ENCODE measurements at regions of chr16 and their contacts with region 1.

Region 1: DNA sequence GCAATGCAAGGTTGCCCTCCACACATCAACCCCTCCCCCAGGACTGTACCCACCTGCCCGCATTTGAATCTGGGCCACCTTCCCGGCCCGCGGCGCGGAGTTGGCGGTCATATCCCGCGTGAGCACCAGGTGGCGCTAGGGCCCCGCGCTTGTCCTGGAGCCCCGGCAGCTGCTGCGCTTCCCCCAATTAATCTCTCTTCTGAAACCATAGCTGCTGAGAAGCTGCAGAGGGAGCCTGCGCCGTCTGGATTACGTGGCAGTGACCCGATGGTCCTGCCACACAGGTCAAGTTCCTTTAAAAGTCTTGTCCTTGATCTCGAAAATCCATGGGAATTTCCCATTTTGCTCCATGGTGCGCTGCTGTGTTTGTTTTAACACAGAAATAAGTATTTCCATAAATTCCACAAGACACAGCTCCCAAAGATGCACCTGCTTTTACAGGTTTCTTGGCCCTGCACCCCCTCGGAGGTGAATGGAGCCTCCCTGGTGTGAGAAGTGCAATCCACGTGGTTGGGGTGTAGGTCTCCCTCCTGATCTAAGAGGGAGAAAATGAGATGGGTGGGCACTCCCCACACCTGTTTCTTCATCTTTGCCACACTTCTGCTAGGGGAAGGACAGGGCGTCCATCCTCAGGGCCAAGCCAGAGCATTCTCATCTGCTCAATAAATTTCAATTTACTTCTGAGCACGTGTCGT is 22.1 kb downstream of the COX4I1 start:
- DNase-seq: peak; percentile 94

Region 2: DNA sequence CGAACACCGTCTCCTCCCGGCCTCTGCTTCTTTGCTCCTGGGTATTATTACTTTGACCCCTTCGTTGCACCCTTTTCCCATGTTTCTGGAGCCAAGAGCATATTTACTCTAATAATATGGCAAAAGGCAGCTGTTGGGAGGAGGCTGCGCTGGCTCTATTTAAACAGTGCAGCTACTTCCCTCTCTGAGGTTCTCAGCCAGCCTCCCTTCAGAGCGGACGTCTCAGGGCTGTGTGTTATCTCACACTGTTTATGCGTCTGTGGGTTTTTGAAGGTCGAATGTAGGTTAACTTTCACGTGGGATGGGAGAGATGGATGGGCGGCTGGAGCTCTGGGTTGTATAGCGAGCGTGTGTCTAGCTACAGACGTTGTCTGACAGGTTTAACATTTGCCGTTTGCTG is 23.2 kb after region 1 on chr16:
- intact Hi-C with region 1: no loop called
- DNase-seq: no peak

Region 3: DNA sequence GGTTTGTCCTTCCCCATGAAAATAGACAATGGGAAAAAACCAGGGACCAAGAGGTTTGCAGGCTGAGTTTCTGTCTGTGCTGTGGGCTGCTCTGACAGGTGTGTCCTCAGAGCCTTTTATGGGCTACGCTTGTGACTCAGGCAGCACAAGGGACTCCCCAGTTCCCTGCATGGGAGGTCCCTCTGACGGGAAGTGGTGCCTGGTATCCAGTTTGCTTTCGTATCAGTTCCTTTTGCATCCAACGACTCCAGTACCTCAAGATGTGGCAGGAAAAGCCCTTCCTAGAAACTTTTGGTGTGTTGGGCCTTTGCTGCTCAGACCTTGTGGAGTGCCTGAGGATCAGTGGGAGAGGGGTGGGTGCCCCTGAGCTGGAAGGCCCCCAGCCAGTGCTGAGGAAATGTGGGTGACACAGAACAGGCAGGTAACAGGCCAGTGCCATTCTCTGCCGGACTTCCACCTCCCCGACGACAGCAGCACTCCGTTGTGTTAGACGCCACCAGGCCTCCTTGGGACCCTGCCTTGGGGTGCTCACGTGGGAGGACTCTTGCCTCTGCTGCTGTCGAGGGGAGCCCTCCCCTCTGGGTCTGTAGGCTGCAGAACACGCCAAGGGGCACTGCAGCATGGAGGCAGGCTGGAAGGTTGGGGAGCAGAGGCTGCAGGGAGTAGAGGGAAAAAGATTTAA is 39.0 kb after region 1 on chr16:
- intact Hi-C with region 1: no loop called
- DNase-seq: no peak

Region 4: DNA sequence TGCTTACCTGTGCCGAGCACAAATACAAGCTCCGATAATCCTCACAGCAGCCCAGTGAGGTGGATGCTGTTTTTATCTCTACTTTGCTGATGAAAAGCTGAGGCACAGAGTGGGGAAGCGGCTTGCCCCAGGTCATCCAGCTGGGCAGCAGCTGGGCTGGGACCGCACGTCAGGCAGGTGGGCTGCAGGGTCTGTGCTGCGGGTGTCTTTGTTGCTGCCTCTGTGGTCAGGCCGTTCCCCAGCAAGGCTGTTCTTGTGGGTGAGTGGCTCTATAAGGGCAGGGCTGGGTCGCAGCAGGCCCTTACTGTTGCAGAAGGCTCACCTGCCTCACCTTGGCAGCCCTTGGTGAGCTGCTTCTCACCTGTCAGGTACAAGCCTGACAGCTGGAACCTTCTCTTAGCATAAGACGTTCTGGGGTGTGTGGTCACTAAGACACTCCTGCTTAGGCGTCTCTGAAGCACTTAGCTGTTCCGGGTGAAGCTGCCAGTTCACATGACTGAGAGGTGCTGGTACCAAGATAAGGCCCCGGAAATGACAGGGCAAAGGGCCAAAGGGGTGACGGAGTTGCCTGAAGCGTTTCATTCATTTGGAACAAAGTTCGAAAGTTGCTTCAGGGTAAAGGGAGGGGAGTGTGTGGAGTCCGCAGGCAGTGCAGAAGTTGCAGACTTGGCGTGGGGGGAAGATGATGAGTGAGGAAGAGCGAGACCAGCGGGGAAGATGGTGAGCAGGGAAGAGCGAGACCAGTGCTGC is 94.7 kb after region 1 on chr16:
- intact Hi-C with region 1: no loop called
- DNase-seq: no peak

Region 5: GRCh38 chr16:85986931-85987749 is 165.6 kb after region 1 on chr16:
- intact Hi-C with region 1: loop called in 1 of 2 experiments (anchors 10 kb)
- DNase-seq: peak; percentile 73

Region 6: DNA sequence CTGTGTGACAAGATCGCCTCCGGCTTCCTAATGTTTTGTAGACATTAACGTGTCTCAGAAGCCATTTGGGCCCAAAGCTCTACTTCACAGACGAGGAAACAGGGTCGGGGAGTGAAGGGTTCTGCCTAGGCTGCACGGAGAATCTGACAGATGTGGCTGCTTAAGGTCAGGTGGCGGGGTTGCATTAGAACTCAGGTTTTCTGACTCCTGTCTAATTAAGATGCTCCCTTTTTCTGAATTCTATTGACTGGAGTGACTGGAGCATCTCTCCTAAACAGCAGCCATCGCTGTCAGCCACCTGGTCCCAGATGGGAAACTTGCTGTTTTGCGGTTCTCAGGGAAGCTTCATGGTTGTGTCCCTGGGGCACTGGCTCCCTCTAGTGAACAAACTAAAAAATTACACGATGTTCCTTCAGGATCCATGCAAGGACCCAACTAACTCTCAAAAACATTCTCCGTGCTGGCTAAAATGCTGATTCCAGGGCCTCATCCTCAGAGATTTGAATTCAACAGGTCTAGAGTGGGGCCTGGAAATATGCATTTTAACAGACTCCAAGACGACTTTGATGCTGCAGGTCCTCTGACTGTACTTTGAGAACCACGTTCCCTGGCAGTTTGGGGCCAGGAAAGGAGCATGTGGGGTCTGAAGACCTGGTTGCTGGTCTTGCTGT is 194.7 kb after region 1 on chr16:
- intact Hi-C with region 1: loop called (anchors 1 to 5 kb)
- DNase-seq: peak; percentile 75

Region 7: DNA sequence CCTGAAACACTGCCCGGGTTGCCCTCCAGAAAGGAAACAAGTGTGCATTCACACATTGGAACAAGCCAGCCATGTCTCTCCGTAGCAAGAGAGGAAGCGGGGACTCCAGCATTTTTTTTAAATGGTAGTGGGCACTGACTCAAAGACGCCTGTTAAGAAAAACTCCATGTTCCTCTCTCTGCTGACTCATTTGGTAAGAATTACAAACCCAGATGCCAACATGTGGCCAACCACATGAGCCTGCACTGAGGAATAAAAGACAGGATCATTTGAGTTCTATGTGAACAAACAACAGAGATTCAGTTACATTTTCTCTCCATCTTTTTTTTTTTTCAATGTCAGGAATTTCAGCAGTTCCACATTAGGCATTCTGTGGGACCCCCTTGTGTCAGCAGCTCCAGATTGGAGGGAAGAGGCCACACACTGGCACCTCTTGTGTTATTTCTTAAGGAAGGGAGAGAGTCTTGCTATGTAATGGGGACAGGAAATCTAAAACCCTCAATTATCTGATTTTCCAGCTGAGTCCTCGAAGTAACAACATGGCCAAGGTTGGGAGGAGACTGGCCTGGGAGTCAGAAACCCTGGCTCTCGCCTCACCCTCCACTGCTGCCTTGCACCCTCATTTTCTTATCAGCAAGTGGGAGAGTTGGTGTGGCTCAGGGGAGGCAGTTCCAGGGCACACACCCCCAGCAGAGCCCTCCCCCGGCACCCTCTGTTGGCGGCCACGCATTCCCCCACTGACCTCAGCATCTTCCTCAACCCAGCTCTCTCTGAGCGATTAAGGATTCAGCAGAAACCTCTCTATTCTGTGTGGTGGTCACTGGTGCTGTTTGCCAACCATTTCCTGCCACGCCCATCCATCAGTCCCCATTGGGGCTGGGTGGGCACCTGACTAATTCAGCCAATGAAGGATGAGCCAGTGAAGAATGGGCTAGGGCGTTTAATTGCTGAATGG is 929.8 kb after region 1 on chr16:
- intact Hi-C with region 1: no loop called
- DNase-seq: peak; percentile 36

Measured in posterior vena cava (tissue), 2 donors.